ENCODE measurements at regions of chr5 and their contacts with region 1.

Region 1: DNA sequence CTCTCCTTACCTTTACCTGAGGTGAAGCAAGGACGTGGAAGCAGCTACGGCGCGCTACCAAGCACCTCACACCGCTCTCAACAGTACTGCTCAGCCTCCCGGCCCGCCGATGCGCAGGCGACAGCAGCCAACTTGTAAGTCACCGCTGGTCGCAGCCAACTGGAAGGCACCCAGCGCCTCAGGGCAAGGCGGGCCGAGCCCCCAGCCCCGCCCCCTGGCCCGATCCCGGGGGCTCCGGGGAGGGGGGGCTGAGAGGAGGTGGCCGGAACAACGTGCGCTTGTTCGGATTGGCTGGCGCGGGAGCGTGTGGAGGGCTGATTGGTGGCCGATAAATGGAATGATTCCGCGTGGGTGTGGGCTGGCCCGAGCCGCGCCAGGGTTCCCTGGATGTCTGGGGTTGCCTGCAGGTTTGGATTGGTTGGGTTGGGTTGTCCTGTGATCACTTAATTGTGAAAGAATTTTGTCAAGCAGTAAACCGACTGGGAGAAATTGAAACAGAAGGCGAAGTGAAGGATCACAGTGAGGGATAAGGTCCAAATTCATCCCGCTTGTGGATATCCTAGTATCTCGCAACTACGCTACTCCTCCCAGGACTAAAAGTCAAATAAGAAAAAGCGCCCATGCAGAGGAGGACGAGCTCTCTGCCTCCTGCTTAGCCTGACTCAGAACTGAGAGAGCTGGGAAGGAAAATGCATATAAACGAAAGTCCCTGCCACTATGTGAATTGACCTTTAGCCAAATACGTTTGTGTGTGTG is at the start of gene STARD4:
- DNase-seq: peak; percentile 94
- ATAC-seq: peak; percentile 96
- H3K4me3 Mint-ChIP-seq: peak within 1 kb of the TSS; percentile 99
- H3K27ac Mint-ChIP-seq: peak within 1 kb of the TSS; percentile 99
- H3K4me1 Mint-ChIP-seq: peaks cover 35% of the 10 kb centered on the region
- H3K27me3 Mint-ChIP-seq: no peaks in the 10 kb centered on the region
- CTCF ChIP-seq: no peak
- total RNA-seq, gene STARD4: 32.2 and 40.3 TPM in 2 replicates

Region 2: GRCh38 chr5:111092062-111092853 is 420.3 kb before region 1 on chr5 and contains the start of gene WDR36:
- CTCF ChIA-PET with region 1: no interaction called
- POLR2A ChIA-PET with region 1: no interaction called
- intact Hi-C with region 1: loop called (anchors 2 kb)
- DNase-seq: peak; percentile 88
- ATAC-seq: peak; percentile 95
- H3K4me3 Mint-ChIP-seq: peak within 1 kb of the TSS; percentile 96
- H3K27ac Mint-ChIP-seq: peak within 1 kb of the TSS; percentile 90
- H3K4me1 Mint-ChIP-seq: peaks cover 31% of the 10 kb centered on the region
- H3K27me3 Mint-ChIP-seq: peaks cover 6% of the 10 kb centered on the region
- CTCF ChIP-seq: no peak
- total RNA-seq, gene WDR36: 42.6 and 48.6 TPM in 2 replicates

Region 3: DNA sequence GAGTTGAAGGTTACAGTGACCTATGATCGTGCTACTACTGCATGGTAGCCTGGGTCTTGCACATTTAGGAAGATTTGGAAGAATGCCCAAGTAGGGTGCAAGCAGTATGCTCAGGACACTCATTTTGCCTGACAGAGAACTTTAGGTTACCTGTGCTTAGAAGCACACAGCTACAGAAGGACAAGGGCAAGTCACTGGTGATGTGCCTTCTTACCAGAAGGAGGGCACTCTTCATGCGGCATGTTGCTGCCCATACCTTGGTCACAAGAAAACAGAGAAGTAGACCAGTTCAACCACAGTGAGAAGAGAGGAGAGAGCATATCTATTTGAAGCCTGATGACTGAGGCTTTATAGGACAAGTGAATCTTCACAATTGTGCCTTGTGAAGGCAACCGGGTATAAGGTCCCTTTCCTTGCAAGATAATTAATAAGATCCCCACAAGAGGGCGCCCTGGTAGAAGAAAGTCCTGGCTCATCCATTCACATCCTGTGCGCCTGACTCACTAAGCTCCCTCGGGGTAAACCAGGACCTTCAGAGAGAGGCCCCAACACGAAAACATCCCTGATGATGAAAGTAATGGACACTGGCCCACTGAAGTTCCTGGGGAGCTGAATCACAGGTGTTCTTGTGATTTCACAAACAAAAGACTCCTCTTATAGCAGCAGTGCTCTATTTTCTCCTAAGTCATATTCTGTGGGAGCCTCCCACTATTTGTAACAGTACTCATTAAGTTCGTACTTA is 37.9 kb after region 1 on chr5:
- CTCF ChIA-PET with region 1: interaction called, 5 read pairs
- POLR2A ChIA-PET with region 1: interaction called, 3 read pairs
- intact Hi-C with region 1: loop called (anchors 2 kb)
- DNase-seq: peak; percentile 27
- ATAC-seq: peak; percentile 76
- H3K4me3 Mint-ChIP-seq: no peak overlapping the region
- H3K27ac Mint-ChIP-seq: no peak overlapping the region
- H3K4me1 Mint-ChIP-seq: peaks cover 4% of the 10 kb centered on the region
- H3K27me3 Mint-ChIP-seq: peaks cover 5% of the 10 kb centered on the region
- CTCF ChIP-seq: peak; percentile 25

Region 4: DNA sequence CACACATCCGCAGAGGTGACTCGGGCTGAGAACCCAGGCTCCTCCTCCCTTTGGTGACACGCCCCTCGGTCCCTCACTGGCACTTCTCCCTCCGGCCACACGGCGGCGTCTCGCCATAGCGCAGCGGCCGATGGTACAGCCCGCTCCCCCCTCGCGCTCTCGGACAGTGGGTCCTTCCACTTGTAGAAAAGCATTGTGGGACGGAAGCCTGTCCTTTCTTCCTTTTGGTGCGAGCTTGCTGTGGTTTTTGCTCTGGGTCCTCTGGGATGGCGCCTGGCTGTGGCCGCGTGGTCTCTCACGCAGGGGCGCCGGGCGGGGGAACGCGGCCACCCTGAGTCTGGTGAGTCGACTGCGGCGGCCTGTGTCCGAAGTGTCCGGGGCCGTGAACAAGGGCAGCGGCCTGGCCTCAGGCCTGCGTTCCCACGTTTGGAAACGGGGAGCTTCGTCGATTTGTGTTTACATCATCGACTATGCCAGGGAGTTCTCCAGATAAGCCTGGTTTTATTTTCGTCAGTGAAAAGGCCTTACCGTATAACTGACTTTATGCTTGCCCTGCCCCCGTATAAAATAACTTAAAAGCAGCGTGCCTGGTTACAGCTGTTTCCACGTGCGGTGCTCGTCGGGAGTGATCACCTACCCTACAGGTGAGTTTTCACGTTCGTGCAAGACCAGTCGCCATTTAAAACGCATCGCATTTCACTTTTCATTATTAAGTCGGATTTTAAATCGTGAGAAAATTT is 648.3 kb after region 1 on chr5:
- CTCF ChIA-PET with region 1: interaction called, 3 read pairs
- POLR2A ChIA-PET with region 1: interaction called, 8 read pairs
- intact Hi-C with region 1: loop called (anchors 2 kb)
- DNase-seq: peak; percentile 93
- ATAC-seq: peak; percentile 99
- H3K4me3 Mint-ChIP-seq: peak overlapping the region; percentile 97
- H3K27ac Mint-ChIP-seq: peak overlapping the region; percentile 82
- H3K4me1 Mint-ChIP-seq: peaks cover 25% of the 10 kb centered on the region
- H3K27me3 Mint-ChIP-seq: no peaks in the 10 kb centered on the region
- CTCF ChIP-seq: peak; percentile 89

Region 5: DNA sequence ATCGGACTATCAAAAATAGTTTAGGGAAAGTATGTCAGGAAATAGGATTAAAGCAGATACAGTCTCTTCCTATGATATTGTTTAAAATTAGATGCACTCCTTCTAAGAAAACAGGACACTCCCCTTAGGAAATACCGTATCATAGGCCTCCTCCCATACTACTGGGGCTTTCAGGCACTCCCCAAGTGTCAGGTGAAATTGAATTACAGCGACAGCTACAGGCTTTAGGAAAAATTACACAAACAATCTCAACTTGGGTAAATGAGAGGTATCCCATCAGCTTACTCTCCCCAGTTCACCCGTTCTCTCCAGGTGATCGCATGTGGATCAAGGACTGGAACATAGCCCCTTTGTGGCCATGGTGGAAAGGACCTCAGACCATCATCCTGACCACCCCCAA is 1017.0 kb after region 1 on chr5:
- CTCF ChIA-PET with region 1: no interaction called
- POLR2A ChIA-PET with region 1: no interaction called
- intact Hi-C with region 1: loop called (anchors 10 kb)
- DNase-seq: no peak
- ATAC-seq: peak; percentile 53
- H3K4me3 Mint-ChIP-seq: no peak overlapping the region
- H3K27ac Mint-ChIP-seq: peak overlapping the region; percentile 48
- H3K4me1 Mint-ChIP-seq: peaks cover 96% of the 10 kb centered on the region
- H3K27me3 Mint-ChIP-seq: no peaks in the 10 kb centered on the region
- CTCF ChIP-seq: no peak

Region 6: DNA sequence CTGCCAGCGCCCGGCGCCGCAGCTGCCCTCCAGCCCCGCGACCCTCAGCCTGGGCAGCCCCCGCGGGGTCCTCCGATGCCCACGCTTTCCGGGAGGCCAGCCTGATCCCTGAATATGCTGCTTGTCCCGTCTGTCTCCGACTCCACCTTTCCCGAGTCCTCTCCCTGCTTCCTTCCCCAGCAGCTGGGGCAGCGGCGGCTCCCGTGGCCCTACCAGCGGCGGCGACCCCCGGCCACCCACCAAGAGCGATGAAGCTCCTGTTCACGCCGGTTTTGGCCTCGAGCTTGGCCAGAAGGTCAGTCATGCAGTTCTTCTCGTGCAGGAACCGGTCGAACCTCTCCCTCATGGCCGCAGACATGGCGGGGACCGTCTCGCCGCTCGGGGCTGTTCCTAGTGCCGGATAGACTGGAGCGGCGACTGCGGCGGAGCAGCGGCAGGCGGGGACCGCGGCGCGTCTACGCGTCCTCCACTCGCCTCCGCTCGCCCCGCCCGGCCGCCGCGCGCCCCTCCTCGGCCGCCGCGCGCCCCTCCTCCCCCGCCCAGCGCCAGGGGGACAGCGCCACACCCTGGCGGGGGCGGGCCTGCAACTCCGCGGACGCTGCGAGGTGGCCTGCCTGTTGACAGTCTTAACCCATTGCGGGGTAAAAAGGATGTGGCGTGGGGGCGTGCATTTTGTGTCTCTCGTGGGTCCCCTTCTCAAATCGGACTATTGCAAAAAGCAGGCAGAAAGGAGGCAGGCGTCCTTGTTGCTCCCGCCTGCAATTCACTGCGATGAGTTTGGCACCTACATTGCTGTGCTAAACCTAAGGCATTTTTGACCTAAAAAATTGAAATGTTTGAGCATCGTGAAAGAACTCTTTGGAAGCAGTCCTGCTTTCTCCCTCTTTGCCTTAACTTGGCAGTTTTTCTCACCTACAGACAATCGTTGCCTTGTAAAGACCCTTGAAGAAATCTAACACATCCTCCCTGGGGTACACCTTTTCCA is 1409.6 kb after region 1 on chr5 and contains the start of gene REEP5:
- CTCF ChIA-PET with region 1: no interaction called
- POLR2A ChIA-PET with region 1: no interaction called
- intact Hi-C with region 1: loop called (anchors 5 kb)
- DNase-seq: peak; percentile 85
- ATAC-seq: peak; percentile 77
- H3K4me3 Mint-ChIP-seq: peak within 1 kb of the TSS; percentile 96
- H3K27ac Mint-ChIP-seq: peak within 1 kb of the TSS; percentile 94
- H3K4me1 Mint-ChIP-seq: peaks cover 80% of the 10 kb centered on the region
- H3K27me3 Mint-ChIP-seq: no peaks in the 10 kb centered on the region
- CTCF ChIP-seq: no peak
- total RNA-seq, gene REEP5: 44.5 and 46.8 TPM in 2 replicates

Region 7: DNA sequence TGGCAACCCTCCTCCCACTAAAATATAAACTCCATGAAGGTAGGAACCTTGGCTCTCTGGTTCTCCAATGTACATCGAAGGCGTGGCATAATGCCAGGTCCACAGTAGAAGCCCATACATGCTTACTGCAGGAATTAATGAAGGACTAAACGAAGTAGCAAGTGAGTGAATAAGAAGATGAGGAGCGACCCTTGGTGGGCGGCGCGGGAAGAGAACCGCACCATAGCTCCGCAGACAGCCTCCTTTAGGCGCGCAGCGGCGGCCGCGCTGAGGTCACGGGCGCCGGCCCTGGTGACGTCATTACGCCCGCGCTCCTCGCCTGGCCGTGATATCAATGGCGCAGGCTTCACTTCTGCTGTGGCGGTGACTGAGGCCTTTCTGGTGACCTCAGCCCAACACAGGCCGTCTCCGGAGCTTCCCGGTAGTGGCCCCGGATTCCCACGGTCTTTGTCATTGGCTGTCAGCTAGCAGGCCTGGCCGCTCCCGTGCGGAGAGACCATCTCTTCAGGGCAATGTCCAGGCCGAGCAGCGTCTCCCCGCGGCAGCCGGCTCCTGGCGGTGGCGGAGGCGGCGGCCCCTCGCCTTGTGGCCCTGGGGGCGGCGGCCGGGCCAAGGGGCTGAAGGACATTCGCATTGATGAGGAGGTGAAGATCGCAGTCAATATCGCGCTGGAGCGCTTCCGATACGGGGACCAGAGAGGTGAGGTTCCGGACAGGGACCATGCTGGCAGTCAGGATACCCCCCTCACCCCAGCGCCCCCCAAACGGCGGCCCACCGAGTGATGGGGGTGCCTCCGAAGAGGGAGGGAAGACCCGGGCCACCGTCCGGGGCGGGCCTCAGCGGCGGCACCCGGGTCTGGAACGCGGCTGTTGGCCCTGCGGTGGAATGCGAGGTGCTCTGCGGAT is 2001.1 kb after region 1 on chr5 and contains the start of gene YTHDC2:
- CTCF ChIA-PET with region 1: no interaction called
- POLR2A ChIA-PET with region 1: no interaction called
- intact Hi-C with region 1: loop called (anchors 5 kb)
- DNase-seq: peak; percentile 86
- ATAC-seq: peak; percentile 98
- H3K4me3 Mint-ChIP-seq: peak within 1 kb of the TSS; percentile 92
- H3K27ac Mint-ChIP-seq: peak within 1 kb of the TSS; percentile 87
- H3K4me1 Mint-ChIP-seq: peaks cover 28% of the 10 kb centered on the region
- H3K27me3 Mint-ChIP-seq: peaks cover 12% of the 10 kb centered on the region
- CTCF ChIP-seq: no peak
- total RNA-seq, gene YTHDC2: 41.7 and 44.8 TPM in 2 replicates